Activated CD8-positive, alpha-beta memory T cell treated with anti-CD3 and anti-CD28 coated beads, Interleukin-2, amount 10 ng/mL, durations not matched to agents 7 days and 5 days (primary cell): ENCODE measurements at regions of chr12 and their contacts with region 1.

Region 1: GRCh38 chr12:9634177-9634803 is 26.6 kb upstream of the KLRB1 start:
- DNase-seq: peak; percentile 85
- ATAC-seq: peak; percentile 75
- H3K4me3 Mint-ChIP-seq: no peak overlapping the region
- H3K27ac Mint-ChIP-seq: peak overlapping the region; percentile 39
- H3K4me1 Mint-ChIP-seq: peaks cover 33% of the 10 kb centered on the region
- H3K27me3 Mint-ChIP-seq: no peaks in the 10 kb centered on the region

Region 2: DNA sequence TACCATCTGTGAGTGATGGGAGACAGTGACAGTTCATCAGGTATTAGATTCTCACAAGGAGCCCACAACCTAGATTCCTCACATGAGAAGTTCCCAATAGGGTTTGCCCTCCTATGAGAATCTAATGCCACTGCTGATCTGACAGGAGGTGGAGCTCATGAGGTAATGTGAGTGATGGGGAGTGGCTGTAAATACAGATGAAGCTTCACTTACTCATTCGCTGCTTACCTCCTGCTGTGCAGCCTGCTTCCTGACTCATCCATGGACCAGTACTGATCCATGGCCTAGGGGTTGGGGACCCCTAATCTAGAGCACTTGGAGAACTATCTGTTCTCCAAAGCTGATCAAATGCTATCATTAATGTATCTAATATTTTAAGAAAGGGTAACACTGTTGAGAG is 52.9 kb after region 1 on chr12:
- CTCF ChIA-PET with region 1: interaction called, 10 read pairs
- DNase-seq: no peak
- ATAC-seq: no peak
- H3K4me3 Mint-ChIP-seq: no peak overlapping the region
- H3K27ac Mint-ChIP-seq: peak overlapping the region; percentile 43
- H3K4me1 Mint-ChIP-seq: peaks cover 67% of the 10 kb centered on the region
- H3K27me3 Mint-ChIP-seq: no peaks in the 10 kb centered on the region

Region 3: DNA sequence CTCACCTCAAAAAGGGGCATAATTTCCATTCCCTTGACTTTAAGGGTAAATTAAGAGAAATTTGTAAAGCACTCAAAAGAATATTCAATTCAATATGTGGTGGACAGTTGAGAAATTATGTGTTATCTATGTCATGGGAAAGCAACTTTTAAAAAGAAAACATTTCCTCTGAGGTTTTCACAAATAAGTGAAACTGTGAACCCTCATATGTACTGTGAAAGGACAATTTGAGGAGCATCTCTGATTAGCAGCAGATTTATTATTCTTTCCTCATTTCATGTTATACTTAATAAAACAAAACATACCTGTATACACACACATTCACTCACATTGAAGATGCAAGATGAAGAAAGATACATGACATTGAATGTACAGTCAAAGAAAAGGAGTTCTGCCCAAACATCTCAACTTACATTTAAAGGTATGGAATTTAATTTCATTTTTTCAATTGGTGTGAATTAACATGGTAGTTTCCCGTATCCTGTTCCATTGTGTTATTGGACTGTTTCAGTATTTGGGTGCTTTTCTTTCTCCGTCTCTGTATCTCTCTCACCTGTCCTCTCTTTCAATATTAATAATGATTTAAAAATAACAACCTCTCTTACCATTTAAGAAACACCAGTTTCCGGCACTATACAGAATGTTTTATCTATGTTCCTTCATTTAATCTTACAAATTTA is 193.1 kb after region 1 on chr12 and contains the start of gene KLRF1:
- CTCF ChIA-PET with region 1: no interaction called
- DNase-seq: no peak
- ATAC-seq: no peak
- H3K4me3 Mint-ChIP-seq: no peak within 1 kb of the TSS
- H3K27ac Mint-ChIP-seq: no peak within 1 kb of the TSS
- H3K4me1 Mint-ChIP-seq: no peaks in the 10 kb centered on the region
- H3K27me3 Mint-ChIP-seq: peaks cover 22% of the 10 kb centered on the region
- total RNA-seq, gene KLRF1: 0.44 to 0.54 TPM